ENCODE measurements at regions of chr3 and their contacts with region 1.

Region 1: GRCh38 chr3:187640569-187641059 is 29.6 kb downstream of the SST start:
- DNase-seq: no peak

Region 2: GRCh38 chr3:187367561-187368103 is 273.0 kb before region 1 on chr3:
- intact Hi-C with region 1: no loop called
- DNase-seq: no peak

Region 3: DNA sequence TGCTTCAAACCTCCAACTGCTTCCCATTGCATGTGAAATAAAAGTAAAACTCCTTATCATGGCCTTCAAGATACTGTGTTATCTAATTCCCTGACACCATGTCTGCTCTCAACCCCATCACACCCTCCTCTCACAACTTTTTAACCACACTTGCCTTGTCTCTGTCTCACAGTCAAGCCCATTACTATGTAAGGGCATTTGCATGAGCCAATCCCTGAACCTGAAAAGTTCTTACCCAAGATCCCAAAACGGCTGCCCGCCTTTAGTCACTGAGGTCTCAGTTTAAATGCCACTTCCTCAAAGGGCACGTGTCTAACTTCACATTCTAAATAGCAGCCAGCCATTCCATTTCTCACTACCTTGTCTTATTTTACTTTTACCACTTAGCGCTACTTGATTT is 53.5 kb before region 1 on chr3:
- intact Hi-C with region 1: no loop called
- DNase-seq: no peak

Region 4: DNA sequence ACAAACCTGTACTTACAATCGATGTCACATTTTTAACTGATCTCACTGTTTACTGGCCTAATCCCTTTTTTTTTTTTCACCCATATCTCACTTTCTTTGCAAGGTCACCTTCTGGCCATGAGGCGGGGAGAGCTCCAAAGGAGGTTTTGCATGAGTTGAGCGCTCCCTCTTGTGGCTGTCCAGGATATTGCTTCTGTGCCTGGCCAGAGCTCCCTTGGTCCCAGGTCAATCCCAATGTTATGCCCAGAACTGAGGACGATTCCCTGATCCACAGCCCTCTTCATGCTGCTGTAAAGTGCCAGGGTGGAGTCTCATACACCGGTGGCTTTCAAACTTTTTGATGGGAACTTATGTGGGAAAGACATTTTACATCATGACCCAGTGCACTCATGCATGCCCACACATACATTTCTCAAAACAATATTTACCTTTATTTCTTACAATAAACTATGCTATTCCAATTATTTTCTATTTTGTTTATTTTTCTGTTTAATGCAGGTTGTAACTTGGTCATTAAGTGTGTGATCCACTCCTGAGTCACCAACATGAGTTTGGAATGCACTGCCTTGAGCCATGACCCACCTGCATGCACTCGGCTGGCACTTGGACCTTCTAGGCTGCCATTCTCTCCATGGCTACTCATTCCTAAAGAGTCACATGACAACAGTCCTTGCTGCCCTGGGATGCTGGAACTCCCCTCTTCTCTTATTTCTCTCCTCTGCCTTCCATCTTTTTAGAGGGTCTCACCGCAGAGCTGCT is 39.2 kb after region 1 on chr3:
- intact Hi-C with region 1: no loop called
- DNase-seq: peak; percentile 90

Region 5: DNA sequence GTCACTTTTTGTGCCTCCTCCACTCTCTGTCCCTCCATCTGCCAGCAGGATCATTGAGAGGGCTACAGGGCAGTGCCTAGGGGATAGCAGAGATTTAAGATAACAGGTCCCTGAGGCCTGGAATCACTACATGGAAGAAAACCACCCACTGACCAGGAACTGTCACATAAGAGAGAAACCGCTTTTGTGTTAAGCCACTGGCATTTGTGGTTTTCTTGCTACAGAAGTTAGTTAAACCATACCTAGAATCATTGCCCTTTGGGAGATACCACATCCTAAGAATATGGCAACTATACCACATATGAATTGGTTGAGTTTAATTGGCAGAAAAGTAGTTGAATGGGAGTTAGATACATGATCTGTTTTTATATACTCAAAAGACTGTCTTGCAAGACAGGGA is 400.6 kb after region 1 on chr3:
- intact Hi-C with region 1: loop called in 1 of 2 experiments (anchors 5 kb)
- DNase-seq: no peak